A673 (cell line): ENCODE measurements at regions of chr15 and their contacts with region 1.

Region 1: DNA sequence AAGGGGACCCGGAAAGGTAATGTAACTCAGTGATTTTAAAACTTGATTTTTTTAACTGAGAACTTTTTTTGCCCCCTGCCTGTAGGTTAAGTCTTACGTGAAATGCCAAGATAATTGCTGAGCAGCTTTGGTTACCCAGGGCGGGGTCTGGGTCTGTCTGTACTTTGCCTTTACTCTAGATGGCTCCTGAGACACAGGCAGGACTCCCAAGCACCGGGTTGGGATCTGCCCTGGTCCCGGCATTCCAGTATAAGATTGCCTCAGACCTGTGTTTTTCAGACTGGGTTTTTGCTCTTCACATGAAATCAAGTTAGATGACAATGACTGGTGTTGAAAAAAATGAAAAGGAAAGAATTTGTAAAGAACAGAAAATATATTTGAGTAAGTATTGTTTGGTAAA is 40.3 kb downstream of the WDR76 start:
- DNase-seq: no peak
- H3K4me3 ChIP-seq: no peak overlapping the region
- H3K27ac ChIP-seq: no peak overlapping the region
- H3K4me1 ChIP-seq: peaks cover 18% of the 10 kb centered on the region
- H3K27me3 ChIP-seq: no peaks in the 10 kb centered on the region
- CTCF ChIP-seq: no peak

Region 2: DNA sequence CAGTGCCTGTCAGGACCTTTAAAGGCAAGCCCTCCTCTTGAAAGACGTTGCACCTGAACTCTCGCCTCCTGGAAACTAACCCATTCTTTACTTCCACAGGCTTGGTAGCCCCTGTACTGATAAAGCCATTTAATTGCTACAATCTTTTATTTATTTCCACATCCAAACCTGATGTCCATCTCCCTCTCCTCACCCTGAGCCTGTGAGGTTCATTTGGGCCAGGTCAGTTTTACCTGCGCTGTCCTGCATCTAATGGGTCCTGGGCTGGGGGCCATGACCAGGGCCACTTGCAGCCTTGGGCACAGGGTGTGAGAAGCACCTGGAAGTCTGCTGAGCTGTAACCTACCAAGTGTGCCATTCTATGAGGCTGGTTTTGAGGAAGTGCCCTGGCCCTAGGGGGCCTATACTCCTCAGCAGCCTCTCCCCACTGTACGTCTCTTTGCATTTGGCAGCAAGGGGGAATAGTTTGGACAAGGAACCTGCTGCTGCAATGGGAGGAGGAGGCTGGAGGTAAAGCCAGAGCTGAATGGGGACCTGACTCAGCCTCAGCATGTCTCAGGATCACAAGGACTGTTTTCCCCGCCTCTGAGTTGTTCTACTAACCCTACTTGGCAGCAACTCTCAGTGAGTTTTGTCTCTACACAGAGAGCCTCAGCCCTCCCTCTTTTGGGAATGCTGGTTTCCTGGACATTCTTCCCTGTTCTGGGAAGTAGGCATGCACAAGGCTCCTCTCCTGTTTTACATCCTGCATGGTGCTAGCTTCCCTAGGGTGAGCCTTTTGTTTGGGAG is 13.5 kb after region 1 on chr15:
- CTCF ChIA-PET with region 1: no interaction called
- POLR2A ChIA-PET with region 1: interaction called, 13 read pairs
- intact Hi-C with region 1: no loop called
- DNase-seq: no peak
- H3K4me3 ChIP-seq: no peak overlapping the region
- H3K27ac ChIP-seq: no peak overlapping the region
- H3K4me1 ChIP-seq: no peaks in the 10 kb centered on the region
- H3K27me3 ChIP-seq: no peaks in the 10 kb centered on the region
- CTCF ChIP-seq: no peak